Activated CD4-positive, alpha-beta T cell treated with anti-CD3 and anti-CD28 coated beads, Interleukin-2, amount 10 ng/mL, durations not matched to agents 7 days and 5 days (primary cell): ENCODE measurements at regions of chr10 and their contacts with region 1.

Region 1: GRCh38 chr10:93357680-93358079 is 124.5 kb downstream of the MYOF start:
- DNase-seq: peak; percentile 22
- H3K4me3 Mint-ChIP-seq: no peak overlapping the region
- H3K27ac Mint-ChIP-seq: no peak overlapping the region
- H3K4me1 Mint-ChIP-seq: peaks cover 2% of the 10 kb centered on the region
- H3K27me3 Mint-ChIP-seq: no peaks in the 10 kb centered on the region

Region 2: DNA sequence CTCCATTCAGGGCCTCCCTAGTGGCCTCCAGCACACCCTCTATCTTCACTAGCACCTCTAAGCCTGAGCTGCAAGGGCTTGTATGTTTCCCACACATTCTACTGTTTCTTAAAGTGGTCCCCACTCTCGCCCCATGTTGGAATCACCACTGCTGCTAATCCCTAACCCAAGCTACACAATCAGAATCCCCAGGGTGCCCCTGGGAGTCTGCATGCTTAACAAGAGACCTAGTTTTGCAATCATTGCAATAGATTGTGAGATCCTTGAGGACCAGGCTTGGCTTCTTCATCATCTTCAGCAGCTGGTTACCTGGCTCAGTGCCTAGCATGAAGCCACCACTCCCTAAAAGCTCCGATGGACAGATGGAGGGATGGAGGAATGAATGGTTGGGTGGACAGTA is 10.5 kb after region 1 on chr10:
- CTCF ChIA-PET with region 1: interaction called, 12 read pairs
- POLR2A ChIA-PET with region 1: no interaction called
- DNase-seq: no peak
- H3K4me3 Mint-ChIP-seq: no peak overlapping the region
- H3K27ac Mint-ChIP-seq: no peak overlapping the region
- H3K4me1 Mint-ChIP-seq: peaks cover 11% of the 10 kb centered on the region
- H3K27me3 Mint-ChIP-seq: no peaks in the 10 kb centered on the region

Region 3: DNA sequence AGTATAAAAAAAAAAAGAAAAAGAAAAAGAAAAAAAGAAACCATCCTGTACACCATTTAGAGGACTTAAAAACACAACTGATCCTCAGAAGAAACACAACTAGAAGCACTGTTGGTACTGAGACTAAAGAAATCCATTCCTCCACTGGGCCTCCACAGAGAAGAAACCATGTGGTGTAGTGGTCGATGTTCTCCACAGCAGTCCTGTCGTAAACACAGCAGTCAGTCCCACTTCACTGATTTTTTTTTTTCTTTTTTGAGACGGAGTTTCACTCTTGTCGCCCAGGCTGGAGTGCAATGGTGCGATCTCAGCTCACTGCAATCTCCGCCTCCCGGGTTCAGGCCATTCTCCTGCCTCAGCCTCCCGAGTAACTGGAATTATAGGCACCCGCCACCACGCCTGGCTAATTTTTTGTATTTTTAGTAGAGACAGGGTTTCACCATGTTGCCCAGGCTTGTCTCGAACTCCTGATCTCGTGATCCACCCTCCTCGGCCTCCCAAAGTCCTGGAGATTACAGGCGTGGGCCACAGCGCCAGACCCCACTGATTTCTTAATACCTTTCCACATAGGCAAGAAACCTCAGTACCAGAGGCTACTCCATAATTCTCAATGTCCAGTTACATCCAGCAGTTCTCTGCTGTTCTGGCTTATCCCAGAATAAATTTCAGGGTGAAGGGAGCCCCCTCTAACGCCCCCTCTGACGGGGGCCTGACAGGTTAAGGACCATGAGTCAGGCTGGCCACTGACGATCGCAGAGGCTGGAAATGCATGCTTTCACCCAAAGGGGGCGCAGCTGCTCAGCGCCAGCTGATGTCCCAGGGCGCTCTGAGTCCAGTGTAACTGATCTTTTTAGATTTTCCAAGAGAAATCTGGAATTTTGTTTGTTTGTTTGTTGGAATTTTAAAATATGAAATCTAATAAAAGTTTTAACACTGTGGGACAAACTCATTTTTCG is 184.0 kb after region 1 on chr10:
- CTCF ChIA-PET with region 1: no interaction called
- POLR2A ChIA-PET with region 1: no interaction called
- DNase-seq: peak; percentile 15
- H3K4me3 Mint-ChIP-seq: no peak overlapping the region
- H3K27ac Mint-ChIP-seq: no peak overlapping the region
- H3K4me1 Mint-ChIP-seq: no peaks in the 10 kb centered on the region
- H3K27me3 Mint-ChIP-seq: peaks cover 34% of the 10 kb centered on the region